A673 (cell line): ENCODE measurements at regions of chr10 and their contacts with region 1.

Region 1: DNA sequence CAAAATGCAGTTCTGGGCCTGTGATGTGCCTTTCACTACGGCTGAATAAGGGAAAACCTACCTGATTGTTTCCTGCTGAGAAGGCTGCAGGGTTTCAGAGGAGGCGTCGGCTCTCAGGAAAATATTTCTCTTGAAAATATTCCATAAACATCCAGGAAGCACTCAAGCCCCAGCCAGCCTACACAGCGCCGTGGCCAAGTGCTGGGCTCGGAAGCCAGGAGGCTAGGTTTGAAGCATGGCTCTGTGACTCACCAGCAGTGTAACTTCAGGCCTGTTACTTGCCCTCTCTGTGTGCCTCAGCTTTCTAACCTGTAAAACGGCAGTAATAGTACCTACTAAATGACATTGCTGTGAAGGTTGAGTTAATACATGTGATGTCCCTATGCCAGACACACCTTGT is 399.1 kb downstream of the GATA3 start:
- DNase-seq: no peak
- H3K4me3 ChIP-seq: no peak overlapping the region
- H3K27ac ChIP-seq: no peak overlapping the region
- H3K4me1 ChIP-seq: peaks cover 6% of the 10 kb centered on the region
- H3K27me3 ChIP-seq: no peaks in the 10 kb centered on the region
- CTCF ChIP-seq: no peak

Region 2: GRCh38 chr10:8079126-8079525 is 374.5 kb before region 1 on chr10:
- CTCF ChIA-PET with region 1: no interaction called
- POLR2A ChIA-PET with region 1: interaction called, 17 read pairs
- intact Hi-C with region 1: no loop called
- DNase-seq: no peak
- H3K4me3 ChIP-seq: no peak overlapping the region
- H3K27ac ChIP-seq: no peak overlapping the region
- H3K4me1 ChIP-seq: no peaks in the 10 kb centered on the region
- H3K27me3 ChIP-seq: no peaks in the 10 kb centered on the region
- CTCF ChIP-seq: no peak